Activated CD4-positive, alpha-beta T cell treated with anti-CD3 and anti-CD28 coated beads for 36 hours (primary cell): ENCODE measurements at regions of chr5 and their contacts with region 1.

Region 1: DNA sequence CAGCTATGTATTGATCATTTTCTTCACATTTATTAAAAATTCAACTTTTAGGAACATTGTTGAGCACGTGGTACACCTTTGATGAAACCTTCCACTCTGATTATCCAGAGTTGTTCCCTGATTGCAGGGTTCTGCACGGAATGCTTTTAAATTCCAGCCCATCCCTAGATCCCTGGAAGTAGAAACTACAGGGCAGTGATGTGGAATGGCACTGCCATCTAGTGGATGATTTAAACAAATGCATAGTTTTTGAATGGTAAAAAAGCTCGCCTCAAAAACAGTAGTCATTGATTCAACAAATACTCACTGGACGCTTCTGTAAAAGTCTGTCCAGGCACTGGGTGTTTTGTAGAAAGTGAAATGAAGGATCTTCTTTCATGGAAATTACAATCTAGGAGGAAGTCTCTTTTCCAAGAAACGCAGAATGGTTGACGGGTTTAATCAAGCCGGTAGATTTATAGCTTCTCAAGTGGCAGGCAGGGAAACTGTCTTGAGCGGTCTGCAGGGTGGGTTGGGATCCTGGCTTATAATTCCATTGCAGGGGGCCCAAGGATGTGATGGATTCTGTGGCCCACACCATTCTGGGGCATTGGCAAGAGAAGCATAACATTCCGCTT is 118.4 kb downstream of the ARHGAP26 start:
- DNase-seq: no peak
- ATAC-seq: no peak
- H3K4me3 Mint-ChIP-seq: no peak overlapping the region
- H3K27ac Mint-ChIP-seq: no peak overlapping the region
- H3K4me1 Mint-ChIP-seq: no peaks in the 10 kb centered on the region
- H3K27me3 Mint-ChIP-seq: no peaks in the 10 kb centered on the region

Region 2: DNA sequence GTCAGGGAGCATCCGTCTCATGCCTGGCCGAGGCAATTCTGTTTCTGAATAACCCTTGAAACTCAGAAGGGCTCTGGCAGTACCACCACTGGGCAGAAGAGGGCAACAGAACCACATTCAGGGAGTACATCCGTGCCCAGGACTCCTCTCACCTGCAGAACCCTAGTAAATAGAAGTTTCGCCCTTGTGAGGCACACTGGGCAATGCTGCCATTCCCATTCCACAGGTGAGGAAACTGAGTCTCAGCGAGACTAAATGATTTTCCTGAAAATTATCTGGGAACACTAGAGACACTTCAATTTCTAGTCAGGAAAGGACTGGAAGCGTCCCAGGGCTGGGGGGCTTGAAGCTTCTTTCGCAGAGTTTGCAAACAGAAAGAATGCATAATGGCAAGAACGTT is 277.4 kb before region 1 on chr5:
- CTCF ChIA-PET with region 1: interaction called, 4 read pairs
- POLR2A ChIA-PET with region 1: no interaction called
- intact Hi-C with region 1: loop called (anchors 5 kb)
- DNase-seq: peak; percentile 85
- ATAC-seq: peak; percentile 97
- H3K4me3 Mint-ChIP-seq: no peak overlapping the region
- H3K27ac Mint-ChIP-seq: no peak overlapping the region
- H3K4me1 Mint-ChIP-seq: no peaks in the 10 kb centered on the region
- H3K27me3 Mint-ChIP-seq: peaks cover 12% of the 10 kb centered on the region

Region 3: DNA sequence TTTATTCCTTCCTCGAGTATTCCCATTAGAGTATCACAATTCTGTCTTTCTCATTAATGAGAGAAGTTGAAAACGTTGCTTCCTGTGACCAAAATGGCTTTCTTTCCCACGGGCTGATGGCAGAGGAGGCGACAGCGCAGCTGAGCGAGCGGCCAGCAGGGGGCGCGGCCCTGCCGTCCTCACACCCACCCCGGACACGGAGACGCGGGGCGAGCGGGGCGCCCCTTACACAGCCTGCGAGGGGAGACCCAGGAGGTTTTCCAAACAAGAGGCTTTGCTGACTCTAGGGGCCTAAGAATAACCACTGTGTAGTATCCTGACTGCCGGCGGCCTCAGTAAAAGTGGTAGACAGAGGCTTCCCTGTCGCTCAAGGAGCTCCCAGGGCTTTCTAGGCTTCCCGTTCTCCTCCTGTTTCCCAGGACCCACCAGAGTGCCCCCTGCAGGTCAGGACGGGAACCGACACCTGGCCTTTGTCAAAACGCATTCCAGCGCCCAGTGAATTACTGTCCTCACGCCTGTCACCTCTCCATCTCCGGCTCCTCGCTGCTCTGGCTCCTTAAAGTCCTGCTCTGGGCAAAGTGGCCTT is 175.4 kb before region 1 on chr5:
- CTCF ChIA-PET with region 1: interaction called, 371 read pairs
- POLR2A ChIA-PET with region 1: interaction called, 3 read pairs
- intact Hi-C with region 1: loop called (anchors 1 kb)
- DNase-seq: peak; percentile 92
- ATAC-seq: peak; percentile 95
- H3K4me3 Mint-ChIP-seq: peak overlapping the region; percentile 64
- H3K27ac Mint-ChIP-seq: no peak overlapping the region
- H3K4me1 Mint-ChIP-seq: peaks cover 3% of the 10 kb centered on the region
- H3K27me3 Mint-ChIP-seq: no peaks in the 10 kb centered on the region

Region 4: DNA sequence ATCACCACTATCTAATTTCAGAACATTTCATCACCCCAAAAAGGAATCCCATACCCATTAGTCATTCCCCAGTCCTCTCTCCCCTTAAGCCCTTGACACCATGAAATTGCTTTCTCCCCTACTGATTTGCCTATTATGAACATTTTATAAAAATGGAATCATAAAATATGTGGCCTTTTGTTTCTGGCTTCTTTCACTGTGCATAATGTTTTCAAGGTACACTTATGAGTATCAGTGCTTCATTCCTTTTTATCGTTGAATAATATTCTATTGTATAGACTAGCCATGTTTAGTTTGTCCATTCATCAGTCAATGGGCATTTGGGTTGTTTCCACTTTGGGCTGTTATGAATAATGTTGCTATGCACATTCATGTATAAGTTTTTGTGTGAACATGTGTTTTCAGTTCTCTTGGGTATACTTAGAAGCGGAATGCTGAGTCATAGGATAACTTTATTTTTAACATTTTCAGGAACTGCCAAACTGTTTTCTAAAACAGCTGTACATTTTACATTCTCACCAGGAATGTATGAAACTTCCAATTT is 162.3 kb before region 1 on chr5:
- CTCF ChIA-PET with region 1: interaction called, 16 read pairs
- POLR2A ChIA-PET with region 1: no interaction called
- intact Hi-C with region 1: no loop called
- DNase-seq: no peak
- ATAC-seq: peak; percentile 65
- H3K4me3 Mint-ChIP-seq: no peak overlapping the region
- H3K27ac Mint-ChIP-seq: no peak overlapping the region
- H3K4me1 Mint-ChIP-seq: peaks cover 10% of the 10 kb centered on the region
- H3K27me3 Mint-ChIP-seq: no peaks in the 10 kb centered on the region

Region 5: GRCh38 chr5:142900927-142901326 is 12.3 kb after region 1 on chr5:
- CTCF ChIA-PET with region 1: interaction called, 15 read pairs
- POLR2A ChIA-PET with region 1: no interaction called
- intact Hi-C with region 1: no loop called
- DNase-seq: no peak
- ATAC-seq: no peak
- H3K4me3 Mint-ChIP-seq: no peak overlapping the region
- H3K27ac Mint-ChIP-seq: no peak overlapping the region
- H3K4me1 Mint-ChIP-seq: no peaks in the 10 kb centered on the region
- H3K27me3 Mint-ChIP-seq: no peaks in the 10 kb centered on the region

Region 6: GRCh38 chr5:142913728-142914338 is 25.3 kb after region 1 on chr5:
- CTCF ChIA-PET with region 1: interaction called, 12 read pairs
- POLR2A ChIA-PET with region 1: no interaction called
- intact Hi-C with region 1: no loop called
- DNase-seq: no peak
- ATAC-seq: no peak
- H3K4me3 Mint-ChIP-seq: no peak overlapping the region
- H3K27ac Mint-ChIP-seq: no peak overlapping the region
- H3K4me1 Mint-ChIP-seq: no peaks in the 10 kb centered on the region
- H3K27me3 Mint-ChIP-seq: no peaks in the 10 kb centered on the region

Region 7: GRCh38 chr5:144092501-144092900 is 1203.9 kb after region 1 on chr5:
- CTCF ChIA-PET with region 1: no interaction called
- POLR2A ChIA-PET with region 1: no interaction called
- intact Hi-C with region 1: no loop called
- DNase-seq: no peak
- ATAC-seq: no peak
- H3K4me3 Mint-ChIP-seq: no peak overlapping the region
- H3K27ac Mint-ChIP-seq: no peak overlapping the region
- H3K4me1 Mint-ChIP-seq: no peaks in the 10 kb centered on the region
- H3K27me3 Mint-ChIP-seq: peaks cover 4% of the 10 kb centered on the region